Right ventricle myocardium inferior (tissue), 1 donor: ENCODE measurements at regions of chr15 and their contacts with region 1.

Region 1: DNA sequence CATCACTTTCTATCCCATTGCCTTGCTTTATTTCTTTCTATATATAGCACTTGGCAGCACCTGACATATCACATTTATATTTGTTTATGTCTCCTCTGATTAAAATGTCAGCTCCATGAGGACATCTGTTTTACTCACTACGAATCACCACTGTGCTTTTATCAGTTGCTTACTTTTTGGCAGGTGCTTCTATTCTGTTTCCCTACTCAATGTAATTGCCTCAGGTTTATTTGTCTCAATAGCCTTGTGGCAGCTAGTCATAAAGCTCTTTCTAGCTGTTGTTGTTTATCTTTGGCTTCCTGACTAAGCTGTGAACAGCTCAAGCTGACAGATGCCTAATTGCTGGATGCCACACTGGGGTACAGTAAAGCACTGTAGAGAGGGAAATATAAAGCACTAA is 85.5 kb downstream of the VPS13C start:
- DNase-seq: no peak
- ATAC-seq: peak; percentile 90

Region 2: GRCh38 chr15:61916104-61916503 is 58.7 kb before region 1 on chr15:
- intact Hi-C with region 1: loop called (anchors 10 kb)
- DNase-seq: no peak
- ATAC-seq: no peak

Region 3: GRCh38 chr15:61935493-61935892 is 39.3 kb before region 1 on chr15:
- intact Hi-C with region 1: no loop called
- DNase-seq: no peak
- ATAC-seq: no peak

Region 4: GRCh38 chr15:62059816-62060112 is 85.0 kb after region 1 on chr15:
- intact Hi-C with region 1: loop called (anchors 10 kb)
- DNase-seq: peak; percentile 72
- ATAC-seq: peak; percentile 59